ENCODE measurements at regions of chr1 and their contacts with region 1.

Region 1: DNA sequence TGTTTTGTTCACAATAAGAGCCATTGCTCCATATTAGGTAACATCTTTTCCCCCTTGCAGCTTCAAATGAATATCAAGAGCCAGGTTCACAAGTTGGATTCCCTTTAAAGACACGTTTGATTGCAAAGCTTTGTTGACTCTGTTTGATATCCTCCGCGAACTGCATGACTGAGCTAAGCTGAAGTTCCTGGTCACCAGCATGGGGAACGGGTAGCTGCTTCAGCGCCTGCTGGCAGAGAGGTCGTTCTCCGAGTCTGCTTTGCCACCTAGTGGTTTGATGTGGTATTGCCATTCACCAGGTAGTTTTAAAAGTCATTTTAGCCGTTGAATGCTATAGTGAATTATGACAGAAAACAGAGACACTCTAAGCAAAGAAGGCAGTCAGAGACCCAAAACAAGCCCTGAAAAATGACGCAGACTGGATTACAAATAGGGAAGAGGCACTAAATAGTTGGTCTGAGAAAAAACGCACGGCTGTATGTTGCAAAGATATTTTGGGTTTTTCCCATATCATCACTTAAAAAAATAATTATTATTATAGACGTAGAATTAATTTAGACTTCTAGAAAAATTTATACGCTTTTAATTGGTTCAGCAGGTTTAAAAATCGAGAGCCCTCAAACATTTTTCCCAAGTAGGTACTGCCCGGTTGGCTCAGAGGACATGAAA is 193.5 kb upstream of the FMN2 start:
- DNase-seq: peak; percentile 67 to 79 (median 71)
- ATAC-seq: peak in 3 of 4 donors; percentile 86 to 90 (median 87)
- H3K4me3 ChIP-seq: peak overlapping the region in 5 of 12 donors; percentile 2 to 32 (median 18)
- H3K27ac ChIP-seq: no peak overlapping the region
- H3K4me1 ChIP-seq: peaks cover 0 to 7% (median 3%) of the 10 kb centered on the region in 12 donors
- H3K27me3 ChIP-seq: peaks cover 0 to 16% (median 0%) of the 10 kb centered on the region in 9 donors
- CTCF ChIP-seq: peak; percentile 84 to 97 (median 94)
- POLR2A ChIP-seq: no peak

Region 2: GRCh38 chr1:238252033-238252802 is 1646.0 kb before region 1 on chr1:
- intact Hi-C with region 1: loop called in 1 of 10 experiments (anchors 10 kb)
- DNase-seq: peak in 3 of 5 donors; percentile 18 to 40 (median 20)
- ATAC-seq: no peak
- H3K4me3 ChIP-seq: no peak overlapping the region
- H3K27ac ChIP-seq: no peak overlapping the region
- H3K4me1 ChIP-seq: no peaks in the 10 kb centered on the region
- H3K27me3 ChIP-seq: no peaks in the 10 kb centered on the region
- CTCF ChIP-seq: peak in 9 of 12 donors; percentile 31 to 57 (median 37)
- POLR2A ChIP-seq: no peak

Region 3: GRCh38 chr1:239308701-239309333 is 589.4 kb before region 1 on chr1:
- intact Hi-C with region 1: loop called in 1 of 10 experiments (anchors 10 kb)
- DNase-seq: peak in 1 of 5 donors; percentile 26
- ATAC-seq: no peak
- H3K4me3 ChIP-seq: no peak overlapping the region
- H3K27ac ChIP-seq: no peak overlapping the region
- H3K4me1 ChIP-seq: no peaks in the 10 kb centered on the region
- H3K27me3 ChIP-seq: no peaks in the 10 kb centered on the region
- CTCF ChIP-seq: peak in 9 of 12 donors; percentile 10 to 56 (median 38)
- POLR2A ChIP-seq: no peak

Region 4: DNA sequence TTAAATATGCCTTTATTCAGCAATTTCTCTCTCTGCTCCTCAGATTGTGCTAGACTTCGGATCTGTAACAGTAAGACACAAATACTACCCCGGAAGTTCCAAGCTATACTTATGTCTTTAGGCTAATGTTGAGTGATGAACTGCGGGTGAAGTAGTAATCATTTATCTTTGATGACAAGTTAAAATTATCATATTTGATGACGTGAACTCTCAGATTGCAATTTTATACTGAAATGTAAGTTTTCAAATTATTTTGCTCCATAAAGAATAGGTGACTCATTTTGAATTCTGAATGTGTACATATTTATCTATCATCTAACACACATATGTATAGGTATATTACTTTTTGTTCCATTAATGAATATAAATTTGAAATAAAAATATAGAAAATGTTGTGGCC is 501.2 kb before region 1 on chr1:
- intact Hi-C with region 1: loop called in 1 of 10 experiments (anchors 5 kb)
- DNase-seq: no peak
- ATAC-seq: no peak
- H3K4me3 ChIP-seq: no peak overlapping the region
- H3K27ac ChIP-seq: no peak overlapping the region
- H3K4me1 ChIP-seq: no peaks in the 10 kb centered on the region
- H3K27me3 ChIP-seq: peaks cover 0 to 16% (median 0%) of the 10 kb centered on the region in 9 donors
- CTCF ChIP-seq: no peak
- POLR2A ChIP-seq: no peak

Region 5: GRCh38 chr1:239413916-239414315 is 484.3 kb before region 1 on chr1:
- intact Hi-C with region 1: loop called in 5 of 10 experiments (anchors 5 kb)
- DNase-seq: no peak
- ATAC-seq: no peak
- H3K4me3 ChIP-seq: no peak overlapping the region
- H3K27ac ChIP-seq: peak overlapping the region in 1 of 12 donors; percentile 60
- H3K4me1 ChIP-seq: no peaks in the 10 kb centered on the region
- H3K27me3 ChIP-seq: no peaks in the 10 kb centered on the region
- CTCF ChIP-seq: no peak
- POLR2A ChIP-seq: no peak

Measured in heart left ventricle (tissue), 16 donors.